ENCODE measurements at regions of chr3 and their contacts with region 1.

Region 1: DNA sequence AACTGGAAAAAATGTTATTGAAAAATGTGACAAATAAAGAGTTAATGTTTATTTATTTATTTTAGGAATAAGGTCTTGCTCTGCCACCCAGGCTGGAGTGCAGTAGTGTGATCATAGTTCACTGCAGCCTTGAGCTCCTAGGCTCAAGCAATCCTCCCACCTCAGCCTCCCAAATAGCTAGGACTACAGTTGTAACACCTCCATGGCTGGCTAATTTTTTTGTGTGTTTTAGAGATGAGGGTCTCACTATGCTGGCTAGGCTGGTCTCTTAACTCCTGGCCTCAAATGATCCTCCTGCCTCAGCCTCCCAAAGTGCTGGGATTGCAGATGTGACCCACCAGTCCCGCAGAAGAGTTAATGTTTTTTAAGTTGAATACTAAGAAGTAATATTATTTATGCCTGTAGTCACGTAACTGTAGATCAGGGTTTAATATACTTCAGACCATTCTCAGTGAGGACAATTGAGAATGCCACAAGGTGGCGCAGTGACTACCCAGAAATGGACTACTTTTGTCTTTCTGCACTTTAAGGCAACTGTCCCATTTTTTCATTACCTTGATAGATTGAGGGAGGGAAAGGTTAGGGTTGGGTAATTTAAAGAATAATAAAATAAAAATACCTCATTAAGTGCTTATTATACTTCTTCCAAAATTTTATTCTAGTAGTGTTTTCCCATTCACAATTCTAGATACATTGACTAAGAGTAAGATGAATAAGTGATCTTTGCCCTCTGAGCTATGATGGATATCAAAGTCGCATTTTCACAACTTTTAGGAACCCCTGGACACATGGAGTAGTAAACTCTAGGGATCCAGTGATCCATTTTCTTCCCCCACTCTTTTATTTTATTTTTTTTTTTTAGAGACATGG is 6.0 kb downstream of the MUC13 start:
- DNase-seq: peak; percentile 74
- H3K4me3 ChIP-seq: no peak overlapping the region
- H3K27ac ChIP-seq: no peak overlapping the region
- H3K4me1 ChIP-seq: no peaks in the 10 kb centered on the region
- H3K27me3 ChIP-seq: peaks cover 0 to 3% of the 10 kb centered on the region in 2 experiments
- CTCF ChIP-seq: peak; percentile 69 to 74
- POLR2A ChIP-seq: no peak

Region 2: GRCh38 chr3:124986158-124987143 is 57.9 kb after region 1 on chr3:
- CTCF ChIA-PET with region 1: interaction called, 7 read pairs
- POLR2A ChIA-PET with region 1: no interaction called
- dilution Hi-C with region 1: no loop called
- intact Hi-C with region 1: loop called (anchors 5 kb)
- DNase-seq: peak; percentile 52
- H3K4me3 ChIP-seq: no peak overlapping the region
- H3K27ac ChIP-seq: peak overlapping the region; percentile 61
- H3K4me1 ChIP-seq: peaks cover 29% of the 10 kb centered on the region
- H3K27me3 ChIP-seq: no peaks in the 10 kb centered on the region
- CTCF ChIP-seq: peak; percentile 36 to 37
- POLR2A ChIP-seq: no peak

Region 3: GRCh38 chr3:125165189-125165947 is 236.8 kb after region 1 on chr3:
- CTCF ChIA-PET with region 1: interaction called, 47 read pairs
- POLR2A ChIA-PET with region 1: interaction called, 10 read pairs
- dilution Hi-C with region 1: no loop called
- intact Hi-C with region 1: loop called (anchors 1 kb)
- DNase-seq: peak; percentile 53
- H3K4me3 ChIP-seq: no peak overlapping the region
- H3K27ac ChIP-seq: no peak overlapping the region
- H3K4me1 ChIP-seq: no peaks in the 10 kb centered on the region
- H3K27me3 ChIP-seq: peaks cover 0 to 2% of the 10 kb centered on the region in 2 experiments
- CTCF ChIP-seq: peak; percentile 58 to 88
- POLR2A ChIP-seq: no peak

Region 4: GRCh38 chr3:125202197-125202596 is 273.6 kb after region 1 on chr3:
- CTCF ChIA-PET with region 1: interaction called, 6 read pairs
- POLR2A ChIA-PET with region 1: no interaction called
- dilution Hi-C with region 1: no loop called
- intact Hi-C with region 1: loop called (anchors 1 kb)
- DNase-seq: no peak
- H3K4me3 ChIP-seq: no peak overlapping the region
- H3K27ac ChIP-seq: no peak overlapping the region
- H3K4me1 ChIP-seq: no peaks in the 10 kb centered on the region
- H3K27me3 ChIP-seq: no peaks in the 10 kb centered on the region
- CTCF ChIP-seq: no peak
- POLR2A ChIP-seq: no peak

Region 5: GRCh38 chr3:125394406-125394805 is 465.8 kb after region 1 on chr3:
- CTCF ChIA-PET with region 1: interaction called, 3 read pairs
- POLR2A ChIA-PET with region 1: no interaction called
- dilution Hi-C with region 1: no loop called
- intact Hi-C with region 1: loop called (anchors 5 kb)
- DNase-seq: no peak
- H3K4me3 ChIP-seq: no peak overlapping the region
- H3K27ac ChIP-seq: no peak overlapping the region
- H3K4me1 ChIP-seq: no peaks in the 10 kb centered on the region
- H3K27me3 ChIP-seq: peaks cover 11 to 14% of the 10 kb centered on the region in 2 experiments
- CTCF ChIP-seq: no peak
- POLR2A ChIP-seq: no peak

Region 6: GRCh38 chr3:125437631-125438435 is 509.3 kb after region 1 on chr3:
- CTCF ChIA-PET with region 1: interaction called, 9 read pairs
- POLR2A ChIA-PET with region 1: no interaction called
- dilution Hi-C with region 1: no loop called
- intact Hi-C with region 1: loop called (anchors 1 kb)
- DNase-seq: peak; percentile 54
- H3K4me3 ChIP-seq: no peak overlapping the region
- H3K27ac ChIP-seq: no peak overlapping the region
- H3K4me1 ChIP-seq: no peaks in the 10 kb centered on the region
- H3K27me3 ChIP-seq: no peaks in the 10 kb centered on the region
- CTCF ChIP-seq: peak; percentile 88 to 89
- POLR2A ChIP-seq: no peak

Region 7: DNA sequence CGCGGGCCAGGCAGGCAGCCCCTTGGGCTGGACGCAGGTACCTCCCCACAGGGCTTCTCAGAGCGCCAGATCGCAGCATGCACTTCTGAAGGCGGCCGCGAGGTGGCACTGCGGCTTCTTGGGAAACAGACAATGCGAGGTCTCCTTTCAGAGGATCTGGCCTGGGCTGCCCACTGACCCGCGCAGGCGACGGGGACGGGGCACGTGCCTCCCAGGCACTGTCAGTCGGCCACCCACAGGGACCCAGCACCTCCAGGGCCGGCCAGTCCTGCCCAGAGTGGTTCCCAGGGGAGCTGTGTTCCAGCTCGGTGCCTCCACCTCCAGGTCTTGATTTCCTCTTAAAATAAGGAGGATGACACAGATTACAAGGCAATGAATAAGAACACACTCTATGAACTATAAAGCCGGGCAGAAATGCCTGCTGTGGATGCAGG is 1750.8 kb after region 1 on chr3:
- CTCF ChIA-PET with region 1: no interaction called
- POLR2A ChIA-PET with region 1: no interaction called
- dilution Hi-C with region 1: no loop called
- intact Hi-C with region 1: no loop called
- DNase-seq: peak; percentile 76
- H3K4me3 ChIP-seq: no peak overlapping the region
- H3K27ac ChIP-seq: no peak overlapping the region
- H3K4me1 ChIP-seq: no peaks in the 10 kb centered on the region
- H3K27me3 ChIP-seq: peaks cover 6 to 26% of the 10 kb centered on the region in 2 experiments
- CTCF ChIP-seq: peak; percentile 91 to 97
- POLR2A ChIP-seq: no peak

Measured in endothelial cell of umbilical vein (primary cell).